ENCODE measurements at regions of chr11 and their contacts with region 1.

Region 1: DNA sequence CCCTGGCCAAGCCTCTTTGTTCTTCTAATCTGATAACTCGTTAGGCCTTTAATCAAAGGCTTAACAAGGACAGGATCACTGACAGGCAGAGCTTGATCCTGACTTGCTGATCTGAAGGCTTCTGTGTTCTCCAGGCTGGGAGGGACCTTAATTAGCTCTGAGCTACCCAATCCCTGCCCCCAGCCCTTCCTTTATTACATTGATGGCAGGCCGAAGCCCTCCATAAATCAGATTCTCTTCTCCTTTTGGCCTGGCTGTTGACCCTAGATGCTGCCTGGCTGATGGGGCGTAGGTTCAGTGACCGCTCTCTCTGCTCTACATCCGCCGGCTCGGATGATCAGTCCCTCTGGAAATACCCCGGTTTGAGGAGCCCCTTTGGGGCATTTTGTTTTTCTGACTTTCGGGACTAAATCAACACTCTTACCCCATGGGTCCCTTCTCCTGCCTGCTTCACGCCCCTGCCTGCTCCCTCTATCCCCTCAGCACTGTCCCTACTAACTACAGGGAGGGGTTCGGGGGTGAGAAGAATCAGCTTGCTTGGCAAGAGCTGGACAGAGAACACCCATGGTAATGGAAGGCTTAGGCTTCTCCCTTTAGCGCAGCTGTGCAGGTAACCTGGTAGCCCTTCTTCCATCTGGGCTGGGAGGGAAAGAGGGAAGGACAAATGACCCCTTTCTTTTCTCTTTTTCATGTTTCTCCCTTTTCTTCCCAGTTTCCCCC is 10.0 kb upstream of the RRM1 start:
- DNase-seq: no peak
- H3K4me3 ChIP-seq: no peak overlapping the region
- H3K27me3 ChIP-seq: no peaks in the 10 kb centered on the region
- CTCF ChIP-seq: no peak

Region 2: DNA sequence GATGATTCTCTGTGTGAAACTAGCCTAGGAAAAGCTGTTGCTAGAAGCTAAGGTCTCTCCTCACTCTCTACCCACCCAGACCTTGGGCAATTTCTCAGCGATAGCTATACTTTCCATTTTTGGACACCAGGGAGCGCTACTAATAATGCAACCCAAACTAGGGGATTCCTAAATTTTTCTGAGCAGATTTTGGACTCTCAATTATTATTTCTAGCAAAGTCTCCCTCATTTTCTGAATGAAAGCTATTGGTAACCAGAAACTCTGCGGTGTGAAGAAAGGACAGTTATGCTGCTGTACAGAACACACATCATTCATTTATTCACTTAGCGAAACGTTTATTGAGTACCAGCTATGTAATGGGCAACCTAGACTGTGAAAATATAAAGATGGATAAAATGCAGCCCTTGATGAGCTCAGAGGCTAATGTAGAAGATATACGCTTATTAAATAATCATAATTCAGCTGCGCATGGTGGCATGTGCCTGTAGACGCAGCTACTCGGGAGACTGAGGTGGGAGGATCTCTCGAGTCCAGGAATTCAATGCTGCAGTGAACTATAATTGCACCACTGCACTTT is 235.2 kb before region 1 on chr11:
- CTCF ChIA-PET with region 1: interaction called, 29 read pairs
- POLR2A ChIA-PET with region 1: no interaction called
- DNase-seq: no peak
- H3K4me3 ChIP-seq: no peak overlapping the region
- H3K27me3 ChIP-seq: no peaks in the 10 kb centered on the region
- CTCF ChIP-seq: peak; percentile 70

Measured in BJ (cell line).